Right ventricle myocardium inferior (tissue), 1 donor: ENCODE measurements at regions of chr5 and their contacts with region 1.

Region 1: DNA sequence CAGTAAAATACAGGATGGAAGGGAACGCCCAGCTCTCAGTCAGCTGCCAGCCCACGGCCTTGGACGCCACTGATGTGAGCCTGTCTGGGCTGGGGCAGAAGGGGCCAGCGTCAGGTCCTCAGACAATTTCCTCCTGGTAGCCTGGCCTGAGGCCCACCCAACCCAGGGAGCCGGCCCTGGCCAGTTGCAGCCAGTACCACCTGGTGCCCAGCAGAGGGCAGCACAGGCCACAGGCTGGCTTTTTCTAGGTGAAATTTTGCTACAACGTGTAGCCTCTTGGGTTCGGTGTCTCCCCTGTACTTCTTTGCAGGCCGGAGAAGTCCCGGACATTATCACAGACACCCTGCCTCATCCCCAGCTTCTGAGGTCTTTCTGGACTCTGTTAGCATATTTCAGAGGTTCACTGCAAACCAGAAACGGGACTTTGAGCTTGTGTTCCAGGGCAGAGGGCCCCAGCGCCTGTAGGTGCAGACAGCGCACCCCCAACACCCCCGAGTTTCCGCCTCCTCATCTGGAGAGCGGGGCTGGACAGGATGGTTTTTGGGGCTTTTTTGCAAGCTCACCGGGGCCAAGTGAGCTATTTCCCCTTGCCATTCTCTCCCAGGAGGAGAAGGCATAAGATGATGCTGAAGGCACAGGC is 45.9 kb upstream of the KCNMB1 start:
- DNase-seq: peak; percentile 80
- ATAC-seq: peak; percentile 85

Region 2: GRCh38 chr5:170483706-170484477 is 48.8 kb after region 1 on chr5:
- intact Hi-C with region 1: no loop called
- DNase-seq: no peak
- ATAC-seq: no peak

Region 3: DNA sequence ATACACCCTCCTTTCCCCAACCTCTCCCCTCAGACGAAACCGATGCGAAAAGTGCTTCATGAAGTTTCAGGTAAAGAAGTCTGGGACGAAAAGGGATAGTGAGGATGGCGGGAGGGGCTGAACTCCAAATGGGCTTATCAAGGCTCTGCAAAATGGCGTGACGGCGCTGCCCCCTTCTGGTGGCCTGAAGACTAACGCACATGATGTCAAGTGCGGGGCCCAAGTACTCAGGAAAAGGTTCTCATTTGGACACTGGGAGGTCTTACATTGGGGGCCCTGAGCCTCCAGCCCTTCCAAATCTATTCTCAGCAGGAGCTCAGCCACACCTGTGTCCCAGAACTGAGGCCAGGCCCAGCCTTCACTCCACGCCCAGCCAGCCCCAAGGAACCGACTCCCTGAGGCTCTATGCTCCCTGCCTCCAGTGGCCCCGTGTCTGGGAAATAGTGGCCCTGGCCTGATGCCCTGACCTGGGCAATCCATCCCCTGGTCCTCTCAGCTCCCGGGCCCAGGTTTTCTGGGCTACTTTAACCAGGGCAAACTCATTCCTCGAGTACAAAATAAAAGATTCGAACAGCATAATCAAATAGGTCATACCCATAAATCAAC is 188.6 kb after region 1 on chr5:
- intact Hi-C with region 1: loop called (anchors 2 kb)
- DNase-seq: peak; percentile 75
- ATAC-seq: no peak

Region 4: GRCh38 chr5:170633235-170634081 is 198.4 kb after region 1 on chr5:
- intact Hi-C with region 1: loop called (anchors 2 kb)
- DNase-seq: peak; percentile 66
- ATAC-seq: peak; percentile 77